MCF 10A (cell line): ENCODE measurements at regions of chr20 and their contacts with region 1.

Region 1: GRCh38 chr20:31738729-31739561 is at the start of gene TPX2:
- DNase-seq: peak; percentile 98
- H3K4me3 Mint-ChIP-seq: no peak within 1 kb of the TSS
- H3K27ac Mint-ChIP-seq: no peak within 1 kb of the TSS
- H3K4me1 Mint-ChIP-seq: no peaks in the 10 kb centered on the region
- H3K27me3 Mint-ChIP-seq: no peaks in the 10 kb centered on the region
- CTCF ChIP-seq: no peak
- total RNA-seq, gene TPX2: 45.3 and 79.6 TPM in 2 replicates

Region 2: GRCh38 chr20:31605031-31605901 is 133.7 kb before region 1 on chr20 and contains the start of gene ID1:
- CTCF ChIA-PET with region 1: no interaction called
- POLR2A ChIA-PET with region 1: interaction called, 47 read pairs
- intact Hi-C with region 1: no loop called
- DNase-seq: peak; percentile 98
- H3K4me3 Mint-ChIP-seq: peak within 1 kb of the TSS; percentile 88
- H3K27ac Mint-ChIP-seq: peak within 1 kb of the TSS; percentile 81
- H3K4me1 Mint-ChIP-seq: peaks cover 24% of the 10 kb centered on the region
- H3K27me3 Mint-ChIP-seq: no peaks in the 10 kb centered on the region
- CTCF ChIP-seq: no peak
- total RNA-seq, gene ID1: 35.7 and 38.4 TPM in 2 replicates

Region 3: DNA sequence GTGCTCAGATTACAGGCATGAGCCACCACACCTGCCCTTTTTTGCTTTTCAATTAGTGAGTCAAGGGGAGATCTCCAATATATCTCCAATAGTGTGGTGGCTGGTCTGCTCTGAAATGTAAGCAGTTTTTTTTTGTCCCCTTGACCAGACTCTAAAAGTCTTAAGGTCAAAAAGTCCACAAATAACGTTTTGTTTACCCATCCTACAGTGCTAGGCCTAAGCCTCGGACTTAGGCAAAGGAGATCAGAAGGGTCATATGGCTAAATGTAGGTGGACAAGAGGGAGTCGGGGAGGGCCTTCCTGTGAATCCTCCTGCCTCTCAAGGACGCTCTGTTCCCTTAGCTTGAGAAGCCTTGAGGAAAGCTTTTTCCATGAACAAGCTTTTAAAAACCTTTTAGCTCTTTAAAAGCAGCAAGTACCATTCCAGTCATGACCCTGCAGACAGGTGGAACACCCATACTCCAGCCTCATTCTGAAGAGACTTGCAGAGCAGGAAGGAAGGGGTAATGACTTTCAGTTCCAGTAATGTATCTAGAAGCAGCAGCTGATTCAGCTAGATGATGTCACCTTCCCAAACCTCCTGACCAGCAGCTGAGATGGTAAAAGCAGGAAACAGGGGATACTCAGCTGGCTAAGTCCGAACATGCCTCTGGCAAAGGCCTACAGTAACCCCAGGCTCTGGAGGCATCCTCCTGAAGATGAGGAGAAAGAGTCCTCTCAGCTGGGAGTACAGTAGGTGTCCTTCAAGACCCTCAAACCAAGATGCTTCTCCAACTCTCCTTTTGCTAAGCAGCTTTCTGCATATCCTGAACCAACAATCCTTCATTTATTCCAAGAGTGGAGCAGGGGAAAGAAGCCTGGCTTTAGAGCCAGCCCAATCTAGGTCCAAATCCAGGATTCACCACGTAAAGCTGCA is 39.9 kb before region 1 on chr20:
- CTCF ChIA-PET with region 1: no interaction called
- POLR2A ChIA-PET with region 1: interaction called, 26 read pairs
- intact Hi-C with region 1: no loop called
- DNase-seq: peak; percentile 76
- H3K4me3 Mint-ChIP-seq: peak overlapping the region; percentile 52
- H3K27ac Mint-ChIP-seq: peak overlapping the region; percentile 97
- H3K4me1 Mint-ChIP-seq: peaks cover 55% of the 10 kb centered on the region
- H3K27me3 Mint-ChIP-seq: no peaks in the 10 kb centered on the region
- CTCF ChIP-seq: no peak

Region 4: DNA sequence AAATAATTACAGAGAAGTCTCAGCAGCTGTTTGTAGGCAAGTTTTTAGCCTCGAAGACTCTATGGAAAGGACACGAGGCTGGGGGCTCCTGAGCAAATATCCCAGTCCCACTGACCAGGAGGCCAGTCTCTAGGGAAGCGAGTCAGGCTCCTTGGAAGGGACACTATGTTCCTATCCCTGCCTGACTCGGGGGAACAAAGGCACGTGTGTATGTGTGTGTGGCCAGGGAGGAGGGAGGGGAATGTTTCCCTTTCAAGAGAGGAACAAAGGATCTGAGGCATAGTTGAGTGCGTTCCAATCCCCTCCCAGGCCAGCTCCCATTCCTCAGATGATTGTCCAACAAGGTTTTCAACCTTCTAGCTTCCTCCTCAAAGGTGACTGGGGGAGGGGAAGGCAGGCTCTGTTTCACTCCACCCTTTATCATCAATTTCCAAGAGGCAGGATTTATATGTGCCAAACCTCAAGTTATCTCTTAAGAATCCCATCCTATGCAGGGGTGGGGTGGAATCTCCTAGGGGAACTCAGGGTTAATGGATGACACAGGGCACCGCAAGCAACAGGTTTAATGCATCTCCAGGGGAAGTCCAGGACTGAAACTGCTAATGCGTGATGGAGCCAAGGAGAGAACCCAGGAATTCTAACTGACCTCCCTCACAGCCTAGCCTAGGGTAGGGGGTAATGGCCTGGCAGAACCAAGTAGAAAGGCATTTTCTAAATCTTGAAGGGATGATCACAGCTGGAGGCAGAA is 26.2 kb before region 1 on chr20:
- CTCF ChIA-PET with region 1: interaction called, 3 read pairs
- POLR2A ChIA-PET with region 1: interaction called, 55 read pairs
- intact Hi-C with region 1: no loop called
- DNase-seq: peak; percentile 92
- H3K4me3 Mint-ChIP-seq: peak overlapping the region; percentile 70
- H3K27ac Mint-ChIP-seq: peak overlapping the region; percentile 96
- H3K4me1 Mint-ChIP-seq: peaks cover 78% of the 10 kb centered on the region
- H3K27me3 Mint-ChIP-seq: no peaks in the 10 kb centered on the region
- CTCF ChIP-seq: no peak

Region 5: GRCh38 chr20:31758521-31758920 is 19.6 kb after region 1 on chr20:
- CTCF ChIA-PET with region 1: interaction called, 13 read pairs
- POLR2A ChIA-PET with region 1: interaction called, 12 read pairs
- intact Hi-C with region 1: no loop called
- DNase-seq: no peak
- H3K4me3 Mint-ChIP-seq: no peak overlapping the region
- H3K27ac Mint-ChIP-seq: peak overlapping the region; percentile 32
- H3K4me1 Mint-ChIP-seq: peaks cover 25% of the 10 kb centered on the region
- H3K27me3 Mint-ChIP-seq: no peaks in the 10 kb centered on the region
- CTCF ChIP-seq: no peak

Region 6: GRCh38 chr20:31770243-31770642 is 31.3 kb after region 1 on chr20:
- CTCF ChIA-PET with region 1: no interaction called
- POLR2A ChIA-PET with region 1: no interaction called
- intact Hi-C with region 1: no loop called
- DNase-seq: no peak
- H3K4me3 Mint-ChIP-seq: peak overlapping the region; percentile 16
- H3K27ac Mint-ChIP-seq: peak overlapping the region; percentile 87
- H3K4me1 Mint-ChIP-seq: no peaks in the 10 kb centered on the region
- H3K27me3 Mint-ChIP-seq: no peaks in the 10 kb centered on the region
- CTCF ChIP-seq: no peak